B cell (primary cell): ENCODE measurements at regions of chr9 and their contacts with region 1.

Region 1: GRCh38 chr9:128249908-128250838 is 25.6 kb downstream of the GOLGA2 start:
- DNase-seq: peak; percentile 97
- ATAC-seq: peak; percentile 98
- H3K4me3 ChIP-seq: peak overlapping the region in 4 of 5 experiments; percentile 47 to 74 (median 60)
- H3K4me3 Mint-ChIP-seq: peak overlapping the region; percentile 93
- H3K27ac ChIP-seq: peak overlapping the region; percentile 53 to 63
- H3K27ac Mint-ChIP-seq: peak overlapping the region; percentile 92
- H3K4me1 ChIP-seq: peaks cover 10 to 26% of the 10 kb centered on the region in 2 donors
- H3K4me1 Mint-ChIP-seq: peaks cover 33% of the 10 kb centered on the region
- H3K27me3 ChIP-seq: peaks cover 0 to 4% (median 0%) of the 10 kb centered on the region in 4 experiments
- H3K27me3 Mint-ChIP-seq: peaks cover 17% of the 10 kb centered on the region
- CTCF ChIP-seq: no peak

Region 2: GRCh38 chr9:128034821-128035764 is 215.1 kb before region 1 on chr9:
- CTCF ChIA-PET with region 1: no interaction called
- POLR2A ChIA-PET with region 1: no interaction called
- intact Hi-C with region 1: no loop called
- DNase-seq: peak; percentile 88
- ATAC-seq: peak; percentile 82
- H3K4me3 ChIP-seq: no peak overlapping the region
- H3K4me3 Mint-ChIP-seq: no peak overlapping the region
- H3K27ac ChIP-seq: no peak overlapping the region
- H3K27ac Mint-ChIP-seq: peak overlapping the region; percentile 71
- H3K4me1 ChIP-seq: peaks cover 29 to 46% of the 10 kb centered on the region in 2 donors
- H3K4me1 Mint-ChIP-seq: peaks cover 33% of the 10 kb centered on the region
- H3K27me3 ChIP-seq: no peaks in the 10 kb centered on the region
- H3K27me3 Mint-ChIP-seq: no peaks in the 10 kb centered on the region
- CTCF ChIP-seq: peak; percentile 93

Region 3: DNA sequence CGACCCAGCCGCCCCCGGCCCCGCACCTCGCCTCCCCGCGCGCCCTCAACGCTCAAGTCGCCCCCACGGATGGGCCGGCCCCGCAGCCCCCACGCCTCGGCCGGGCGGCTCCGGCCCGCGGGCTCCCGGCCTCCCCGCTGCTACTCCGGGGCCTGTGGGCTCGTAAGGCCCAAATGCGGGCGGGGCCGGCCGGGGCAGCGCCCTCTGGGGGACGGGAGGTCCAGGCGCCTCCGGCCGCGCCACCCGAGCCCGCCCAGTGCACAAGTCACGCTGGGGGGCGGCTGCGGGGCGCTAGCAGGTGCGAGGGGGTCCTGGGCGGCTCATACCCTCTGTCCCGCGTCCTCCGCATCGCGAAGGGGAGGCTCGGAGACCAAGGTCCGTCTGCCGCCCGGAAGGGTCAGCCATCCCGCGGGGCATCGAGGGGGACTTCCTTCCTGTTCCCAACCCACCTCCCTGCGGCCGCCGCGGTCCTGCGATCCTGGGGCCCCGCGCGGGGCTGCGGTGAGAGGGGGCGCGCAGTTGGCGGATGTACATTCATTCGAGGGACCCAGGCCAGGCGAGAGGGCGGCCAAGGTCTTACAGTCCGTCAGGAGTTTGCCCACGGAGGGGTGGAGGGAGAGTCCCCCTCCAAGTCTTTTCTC is 58.6 kb before region 1 on chr9 and contains the start of gene CIZ1:
- CTCF ChIA-PET with region 1: no interaction called
- POLR2A ChIA-PET with region 1: interaction called, 4 read pairs
- intact Hi-C with region 1: loop called (anchors 1 kb)
- DNase-seq: peak; percentile 88
- ATAC-seq: peak; percentile 90
- H3K4me3 ChIP-seq: peak within 1 kb of the TSS; percentile 26 to 82 (median 73)
- H3K4me3 Mint-ChIP-seq: peak within 1 kb of the TSS; percentile 94
- H3K27ac ChIP-seq: peak within 1 kb of the TSS; percentile 44 to 76
- H3K27ac Mint-ChIP-seq: peak within 1 kb of the TSS; percentile 92
- H3K4me1 ChIP-seq: peaks cover 12 to 24% of the 10 kb centered on the region in 2 donors
- H3K4me1 Mint-ChIP-seq: peaks cover 29% of the 10 kb centered on the region
- H3K27me3 ChIP-seq: no peaks in the 10 kb centered on the region
- H3K27me3 Mint-ChIP-seq: no peaks in the 10 kb centered on the region
- CTCF ChIP-seq: peak; percentile 84
- total RNA-seq, gene CIZ1: 160 and 169 TPM in 2 replicates

Region 4: GRCh38 chr9:128203024-128203706 is 47.0 kb before region 1 on chr9 and contains the start of gene DNM1:
- CTCF ChIA-PET with region 1: interaction called, 3 read pairs
- POLR2A ChIA-PET with region 1: no interaction called
- intact Hi-C with region 1: loop called (anchors 1 kb)
- DNase-seq: peak; percentile 86
- ATAC-seq: peak; percentile 97
- H3K4me3 ChIP-seq: peak within 1 kb of the TSS in 4 of 5 experiments; percentile 42 to 64 (median 58)
- H3K4me3 Mint-ChIP-seq: peak within 1 kb of the TSS; percentile 90
- H3K27ac ChIP-seq: peak within 1 kb of the TSS in 1 of 2 donors; percentile 11
- H3K27ac Mint-ChIP-seq: peak within 1 kb of the TSS; percentile 80
- H3K4me1 ChIP-seq: peaks cover 12 to 16% of the 10 kb centered on the region in 2 donors
- H3K4me1 Mint-ChIP-seq: peaks cover 9% of the 10 kb centered on the region
- H3K27me3 ChIP-seq: peaks cover 0 to 29% (median 8%) of the 10 kb centered on the region in 4 experiments
- H3K27me3 Mint-ChIP-seq: peaks cover 21% of the 10 kb centered on the region
- CTCF ChIP-seq: peak; percentile 90
- total RNA-seq, gene DNM1: 1.3 and 1.9 TPM in 2 replicates

Region 5: DNA sequence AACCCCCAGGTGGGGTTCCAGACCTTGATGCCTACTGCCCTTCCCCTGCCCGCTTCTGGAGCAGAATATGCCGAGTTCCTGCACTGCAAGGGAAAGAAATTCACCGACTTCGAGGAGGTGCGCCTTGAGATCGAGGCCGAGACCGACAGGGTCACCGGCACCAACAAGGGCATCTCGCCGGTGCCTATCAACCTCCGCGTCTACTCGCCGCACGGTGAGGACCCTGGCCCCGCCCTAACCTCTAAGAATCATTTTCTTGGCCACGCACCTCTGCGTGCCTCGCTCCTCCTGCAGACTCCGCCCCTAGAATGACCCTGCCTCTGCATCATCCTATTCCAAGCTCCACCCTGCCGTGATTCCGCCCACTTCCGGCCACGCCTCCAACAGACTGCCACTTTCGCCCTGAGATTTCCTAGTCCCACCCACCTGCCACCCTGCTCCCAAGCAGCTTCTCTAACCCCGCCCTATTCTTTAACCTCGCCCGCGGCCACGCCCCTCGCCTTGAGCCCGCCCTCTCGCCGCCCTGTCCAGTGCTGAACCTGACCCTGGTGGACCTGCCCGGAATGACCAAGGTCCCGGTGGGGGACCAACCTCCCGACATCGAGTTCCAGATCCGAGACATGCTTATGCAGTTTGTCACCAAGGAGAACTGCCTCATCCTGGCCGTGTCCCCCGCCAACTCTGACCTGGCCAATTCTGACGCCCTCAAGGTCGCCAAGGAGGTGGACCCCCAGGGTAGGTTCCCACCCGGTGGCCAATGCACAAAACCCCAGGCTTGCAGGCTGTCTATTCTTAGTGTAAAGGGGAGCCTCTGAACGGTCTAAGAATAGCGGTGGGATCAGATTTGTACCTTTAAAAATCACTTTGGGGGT is 31.4 kb before region 1 on chr9:
- CTCF ChIA-PET with region 1: interaction called, 3 read pairs
- POLR2A ChIA-PET with region 1: no interaction called
- intact Hi-C with region 1: loop called (anchors 1 kb)
- DNase-seq: peak; percentile 94
- ATAC-seq: peak; percentile 95
- H3K4me3 ChIP-seq: peak overlapping the region; percentile 9 to 67 (median 54)
- H3K4me3 Mint-ChIP-seq: peak overlapping the region; percentile 85
- H3K27ac ChIP-seq: no peak overlapping the region
- H3K27ac Mint-ChIP-seq: peak overlapping the region; percentile 12
- H3K4me1 ChIP-seq: peaks cover 9 to 16% of the 10 kb centered on the region in 2 donors
- H3K4me1 Mint-ChIP-seq: peaks cover 11% of the 10 kb centered on the region
- H3K27me3 ChIP-seq: peaks cover 0 to 5% (median 0%) of the 10 kb centered on the region in 4 experiments
- H3K27me3 Mint-ChIP-seq: peaks cover 4% of the 10 kb centered on the region
- CTCF ChIP-seq: no peak

Region 6: DNA sequence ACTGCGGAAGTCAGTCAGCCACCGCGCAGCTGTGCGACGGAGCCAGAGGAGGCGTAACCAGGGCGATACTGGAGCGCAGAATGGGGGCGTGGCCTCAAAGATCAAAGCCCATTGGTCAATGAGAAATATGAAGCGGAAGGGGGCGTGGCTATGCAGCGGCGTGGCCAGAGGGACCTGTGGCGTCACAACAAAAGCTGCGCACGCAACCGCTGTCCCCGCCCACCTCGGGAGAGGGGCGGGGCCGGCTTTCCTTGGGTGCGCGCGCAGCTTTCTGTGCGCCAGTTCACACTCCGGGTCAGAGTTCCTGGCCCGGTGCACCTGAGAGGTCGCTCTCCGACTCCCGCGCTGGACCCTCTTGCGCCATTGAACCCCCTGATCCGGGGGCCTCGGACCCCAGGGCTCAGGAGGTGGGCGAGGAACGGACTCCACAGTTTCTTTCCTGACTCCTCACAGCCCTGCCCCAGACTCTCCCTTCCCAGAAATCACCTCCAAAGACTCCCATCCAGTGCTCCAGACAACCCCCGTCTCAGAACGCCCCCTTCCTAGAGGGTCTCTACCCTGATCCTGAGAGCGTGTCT is 25.9 kb after region 1 on chr9 and contains the starts of genes GOLGA2 and SWI5:
- CTCF ChIA-PET with region 1: interaction called, 14 read pairs
- POLR2A ChIA-PET with region 1: interaction called, 5 read pairs
- intact Hi-C with region 1: loop called (anchors 1 kb)
- DNase-seq: peak; percentile 100
- ATAC-seq: peak; percentile 93
- H3K4me3 ChIP-seq: peak within 1 kb of the TSS; percentile 61 to 99 (median 87)
- H3K4me3 Mint-ChIP-seq: peak within 1 kb of the TSS; percentile 96
- H3K27ac ChIP-seq: peak within 1 kb of the TSS; percentile 81 to 92
- H3K27ac Mint-ChIP-seq: peak within 1 kb of the TSS; percentile 97
- H3K4me1 ChIP-seq: peaks cover 14 to 20% of the 10 kb centered on the region in 2 donors
- H3K4me1 Mint-ChIP-seq: peaks cover 23% of the 10 kb centered on the region
- H3K27me3 ChIP-seq: no peaks in the 10 kb centered on the region
- H3K27me3 Mint-ChIP-seq: no peaks in the 10 kb centered on the region
- CTCF ChIP-seq: no peak
- total RNA-seq, gene GOLGA2: 76.3 and 87.3 TPM in 2 replicates
- total RNA-seq, gene SWI5: 8.6 and 13.3 TPM in 2 replicates

Region 7: DNA sequence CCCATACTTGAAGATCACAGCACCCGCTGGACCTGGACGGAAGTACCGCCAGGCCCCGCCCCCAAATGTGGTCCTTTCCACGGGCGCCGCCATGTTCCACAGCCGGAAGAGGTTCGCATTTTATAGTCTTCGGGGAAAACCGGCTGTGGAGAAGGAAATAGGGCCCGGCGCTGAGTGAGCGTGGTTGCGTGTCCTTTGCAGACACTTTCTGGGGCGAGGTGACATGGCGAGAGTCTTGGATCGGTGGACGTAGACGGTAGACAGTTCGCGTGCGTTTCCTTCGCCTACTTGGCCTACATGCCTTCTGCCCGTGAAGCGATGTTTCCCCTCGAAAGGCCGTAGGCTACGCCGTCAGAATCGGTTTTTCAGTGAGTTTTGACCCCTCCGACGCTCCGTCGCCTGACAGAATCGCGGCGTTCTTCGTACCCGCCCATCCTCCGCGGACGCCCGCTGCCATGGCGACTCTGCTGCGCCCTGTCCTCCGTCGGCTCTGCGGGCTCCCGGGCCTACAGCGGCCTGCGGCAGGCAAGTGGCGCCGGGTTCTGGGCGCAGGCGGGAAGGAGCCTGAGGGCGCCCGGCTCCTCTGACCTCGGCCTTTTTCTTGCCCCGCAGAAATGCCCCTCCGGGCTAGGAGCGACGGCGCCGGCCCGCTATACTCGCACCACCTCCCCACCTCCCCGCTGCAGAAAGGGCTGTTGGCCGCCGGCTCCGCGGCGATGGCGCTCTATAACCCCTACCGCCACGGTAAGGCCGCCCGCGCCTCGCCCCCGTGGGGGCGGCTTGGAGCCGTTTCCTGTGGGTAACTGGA is 72.4 kb after region 1 on chr9 and contains the starts of genes COQ4 and TRUB2:
- CTCF ChIA-PET with region 1: no interaction called
- POLR2A ChIA-PET with region 1: no interaction called
- intact Hi-C with region 1: loop called (anchors 1 kb)
- DNase-seq: peak; percentile 97
- ATAC-seq: peak; percentile 85
- H3K4me3 ChIP-seq: peak within 1 kb of the TSS; percentile 61 to 95 (median 92)
- H3K4me3 Mint-ChIP-seq: peak within 1 kb of the TSS; percentile 97
- H3K27ac ChIP-seq: peak within 1 kb of the TSS; percentile 75 to 78
- H3K27ac Mint-ChIP-seq: peak within 1 kb of the TSS; percentile 98
- H3K4me1 ChIP-seq: peaks cover 17 to 22% of the 10 kb centered on the region in 2 donors
- H3K4me1 Mint-ChIP-seq: peaks cover 31% of the 10 kb centered on the region
- H3K27me3 ChIP-seq: no peaks in the 10 kb centered on the region
- H3K27me3 Mint-ChIP-seq: no peaks in the 10 kb centered on the region
- CTCF ChIP-seq: no peak
- total RNA-seq, gene COQ4: 54.9 and 57.3 TPM in 2 replicates
- total RNA-seq, gene TRUB2: 21.4 and 21.5 TPM in 2 replicates

Region 8: GRCh38 chr9:128798896-128799295 is 548.7 kb after region 1 on chr9:
- CTCF ChIA-PET with region 1: no interaction called
- POLR2A ChIA-PET with region 1: no interaction called
- intact Hi-C with region 1: no loop called
- DNase-seq: no peak
- ATAC-seq: no peak
- H3K4me3 ChIP-seq: no peak overlapping the region
- H3K4me3 Mint-ChIP-seq: no peak overlapping the region
- H3K27ac ChIP-seq: no peak overlapping the region
- H3K27ac Mint-ChIP-seq: no peak overlapping the region
- H3K4me1 ChIP-seq: no peaks in the 10 kb centered on the region
- H3K4me1 Mint-ChIP-seq: no peaks in the 10 kb centered on the region
- H3K27me3 ChIP-seq: no peaks in the 10 kb centered on the region
- H3K27me3 Mint-ChIP-seq: no peaks in the 10 kb centered on the region
- CTCF ChIP-seq: no peak